MCF 10A (cell line): ENCODE measurements at regions of chr7 and their contacts with region 1.

Region 1: GRCh38 chr7:139771001-139771970 is 6.5 kb downstream of the HIPK2 start:
- DNase-seq: peak; percentile 91
- H3K4me3 Mint-ChIP-seq: peak overlapping the region; percentile 63
- H3K27ac Mint-ChIP-seq: peak overlapping the region; percentile 98
- H3K4me1 Mint-ChIP-seq: peaks cover 64% of the 10 kb centered on the region
- H3K27me3 Mint-ChIP-seq: no peaks in the 10 kb centered on the region
- CTCF ChIP-seq: no peak

Region 2: DNA sequence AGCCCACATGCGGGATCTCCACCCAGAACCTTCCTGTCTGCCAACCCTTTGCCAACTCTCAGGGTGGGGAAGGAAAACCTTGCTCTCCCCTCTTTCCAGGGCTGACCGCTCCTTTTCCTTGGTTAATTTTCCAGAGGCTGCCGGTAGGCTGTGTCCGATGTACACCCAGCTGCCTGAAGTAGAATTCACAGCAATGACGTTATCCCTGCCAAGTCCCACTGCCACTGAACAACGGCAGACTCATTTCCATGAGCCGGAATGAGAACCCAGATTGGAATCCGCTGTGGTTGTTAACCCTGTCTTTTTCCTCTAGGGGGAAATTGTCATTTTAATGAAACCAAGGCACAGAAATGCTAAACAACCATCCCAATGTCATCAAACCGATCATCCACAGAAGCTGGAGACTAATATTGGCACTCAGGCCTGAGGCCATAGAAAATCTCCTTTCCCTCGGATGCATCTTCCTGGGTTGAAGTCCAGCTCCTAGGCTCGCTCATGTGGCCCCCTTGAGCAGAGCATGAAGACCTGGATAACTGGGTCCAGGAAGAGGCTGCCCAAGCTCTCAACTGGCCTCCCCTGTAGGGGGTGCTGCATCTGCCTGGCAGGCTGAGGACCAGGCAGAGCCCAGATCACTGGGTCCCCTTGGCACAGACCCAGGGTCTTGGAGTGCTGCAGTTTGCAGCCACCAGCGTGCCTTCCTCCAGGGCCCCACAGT is 318.2 kb before region 1 on chr7:
- CTCF ChIA-PET with region 1: no interaction called
- POLR2A ChIA-PET with region 1: no interaction called
- intact Hi-C with region 1: no loop called
- DNase-seq: no peak
- H3K4me3 Mint-ChIP-seq: no peak overlapping the region
- H3K27ac Mint-ChIP-seq: no peak overlapping the region
- H3K4me1 Mint-ChIP-seq: peaks cover 14% of the 10 kb centered on the region
- H3K27me3 Mint-ChIP-seq: no peaks in the 10 kb centered on the region
- CTCF ChIP-seq: no peak

Region 3: DNA sequence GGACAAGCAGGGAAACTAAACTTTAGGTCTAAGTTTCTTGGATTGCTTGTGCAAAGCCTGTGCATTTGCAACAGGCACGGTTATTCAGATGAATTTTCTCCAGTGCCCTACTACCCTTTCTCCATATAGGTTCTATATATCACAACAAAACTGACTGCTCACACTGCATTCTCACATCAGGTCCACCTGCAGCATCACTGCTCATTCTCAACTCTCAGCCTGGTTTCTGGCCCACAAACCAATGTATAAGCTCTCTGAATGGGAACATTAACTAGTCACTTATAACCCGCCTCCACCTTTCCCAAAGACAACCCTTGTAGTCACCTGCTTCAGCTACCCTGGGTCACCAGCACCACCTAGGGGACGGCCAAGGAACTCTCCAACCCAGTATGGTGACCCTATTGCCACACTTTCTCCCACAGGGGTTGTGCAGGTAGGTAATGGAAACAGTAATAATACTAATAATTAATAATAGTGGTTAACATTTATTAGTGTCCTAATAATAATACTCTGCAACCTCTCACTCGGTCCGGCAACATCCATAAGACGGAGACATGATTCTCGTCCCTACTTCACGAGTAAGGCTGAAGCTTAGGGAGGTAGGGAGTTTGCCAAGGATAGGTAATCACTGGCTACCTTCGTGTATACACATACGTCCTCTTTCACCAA is 150.5 kb before region 1 on chr7:
- CTCF ChIA-PET with region 1: interaction called, 10 read pairs
- POLR2A ChIA-PET with region 1: no interaction called
- intact Hi-C with region 1: no loop called
- DNase-seq: peak; percentile 39
- H3K4me3 Mint-ChIP-seq: no peak overlapping the region
- H3K27ac Mint-ChIP-seq: no peak overlapping the region
- H3K4me1 Mint-ChIP-seq: peaks cover 10% of the 10 kb centered on the region
- H3K27me3 Mint-ChIP-seq: no peaks in the 10 kb centered on the region
- CTCF ChIP-seq: peak; percentile 73

Region 4: DNA sequence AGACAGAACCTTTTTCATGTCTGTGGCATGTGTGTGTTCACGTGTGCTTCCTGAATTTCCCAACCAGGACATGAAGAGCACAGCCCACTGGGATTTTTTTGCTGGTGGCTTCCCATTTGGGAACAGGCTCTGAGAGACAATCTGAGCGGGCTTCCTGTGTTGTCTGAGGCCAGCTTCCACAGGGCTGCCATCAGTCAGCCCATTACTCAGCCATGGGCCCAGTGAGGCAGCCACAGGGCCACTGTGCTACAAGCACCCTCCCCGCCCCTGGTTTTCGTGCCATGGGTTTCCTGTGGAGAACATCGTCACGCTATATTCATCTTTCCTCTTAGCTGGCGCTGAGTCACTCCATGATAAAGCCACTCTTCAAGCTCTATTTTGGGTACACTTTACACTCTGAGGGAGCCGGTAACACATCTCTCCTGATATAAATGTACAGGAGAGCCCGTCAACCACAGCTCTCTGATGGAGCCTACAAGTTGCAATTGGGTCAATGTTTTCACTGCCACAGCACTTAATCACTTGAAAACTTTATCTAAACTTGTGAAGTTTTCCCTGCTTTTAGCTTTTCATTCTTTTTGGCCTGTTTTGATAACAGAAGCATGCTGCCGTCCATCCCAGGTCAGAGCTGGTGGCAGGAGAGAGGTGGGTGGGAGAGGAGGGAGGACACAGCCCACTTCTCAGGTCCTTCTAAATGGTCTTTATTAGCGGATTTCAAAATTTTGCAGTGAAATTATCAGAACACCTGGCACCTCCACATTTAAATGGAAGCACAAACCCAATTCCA is 90.4 kb before region 1 on chr7:
- CTCF ChIA-PET with region 1: no interaction called
- POLR2A ChIA-PET with region 1: interaction called, 14 read pairs
- intact Hi-C with region 1: loop called (anchors 2 kb)
- DNase-seq: peak; percentile 95
- H3K4me3 Mint-ChIP-seq: peak overlapping the region; percentile 13
- H3K27ac Mint-ChIP-seq: peak overlapping the region; percentile 94
- H3K4me1 Mint-ChIP-seq: peaks cover 54% of the 10 kb centered on the region
- H3K27me3 Mint-ChIP-seq: no peaks in the 10 kb centered on the region
- CTCF ChIP-seq: no peak

Region 5: DNA sequence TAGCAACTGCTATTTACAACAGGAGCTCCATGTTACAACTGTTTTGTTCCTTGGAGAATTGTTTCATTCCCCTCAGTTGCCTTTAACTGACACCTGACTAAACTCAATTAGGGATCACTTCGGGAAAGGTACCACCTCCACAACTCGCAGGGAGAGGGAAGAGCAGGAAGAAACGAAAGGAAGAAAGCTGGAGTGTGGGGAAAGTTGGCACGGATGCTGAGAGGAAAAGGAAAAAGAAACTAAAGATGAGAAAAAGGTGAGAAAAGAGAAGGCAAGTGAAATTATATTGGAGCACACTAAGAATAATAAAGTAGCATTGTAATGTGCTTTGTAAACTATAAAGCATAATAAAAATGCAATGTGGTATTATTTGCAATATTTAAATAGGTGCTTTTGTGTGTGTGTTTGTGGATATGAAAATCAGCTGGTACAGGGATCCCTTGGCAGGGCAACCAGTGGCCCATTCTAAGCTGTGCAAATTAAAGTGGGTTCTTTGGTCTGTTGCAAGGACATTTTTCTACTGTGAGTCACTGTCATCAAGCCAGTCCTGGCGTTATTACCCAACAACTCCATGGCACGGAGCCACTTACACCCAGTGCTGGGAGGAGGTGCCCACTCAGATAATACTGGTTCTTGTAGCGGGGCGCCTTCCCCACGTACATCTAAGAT is 39.4 kb before region 1 on chr7:
- CTCF ChIA-PET with region 1: interaction called, 5 read pairs
- POLR2A ChIA-PET with region 1: interaction called, 72 read pairs
- intact Hi-C with region 1: loop called (anchors 1 kb)
- DNase-seq: peak; percentile 98
- H3K4me3 Mint-ChIP-seq: peak overlapping the region; percentile 57
- H3K27ac Mint-ChIP-seq: peak overlapping the region; percentile 87
- H3K4me1 Mint-ChIP-seq: peaks cover 73% of the 10 kb centered on the region
- H3K27me3 Mint-ChIP-seq: no peaks in the 10 kb centered on the region
- CTCF ChIP-seq: no peak

Region 6: GRCh38 chr7:140003913-140004382 is 232.7 kb after region 1 on chr7:
- CTCF ChIA-PET with region 1: interaction called, 24 read pairs
- POLR2A ChIA-PET with region 1: interaction called, 6 read pairs
- intact Hi-C with region 1: loop called (anchors 1 kb)
- DNase-seq: peak; percentile 80
- H3K4me3 Mint-ChIP-seq: no peak overlapping the region
- H3K27ac Mint-ChIP-seq: no peak overlapping the region
- H3K4me1 Mint-ChIP-seq: no peaks in the 10 kb centered on the region
- H3K27me3 Mint-ChIP-seq: no peaks in the 10 kb centered on the region
- CTCF ChIP-seq: peak; percentile 56